AG04449 (cell line): ENCODE measurements at regions of chr5 and their contacts with region 1.

Region 1: GRCh38 chr5:167565032-167565954 is 726.2 kb upstream of the WWC1 start:
- DNase-seq: no peak
- H3K4me3 ChIP-seq: no peak overlapping the region
- CTCF ChIP-seq: peak; percentile 17

Region 2: GRCh38 chr5:166961039-166961438 is 604.3 kb before region 1 on chr5:
- CTCF ChIA-PET with region 1: interaction called, 15 read pairs
- POLR2A ChIA-PET with region 1: no interaction called
- DNase-seq: no peak
- H3K4me3 ChIP-seq: no peak overlapping the region
- CTCF ChIP-seq: no peak

Region 3: DNA sequence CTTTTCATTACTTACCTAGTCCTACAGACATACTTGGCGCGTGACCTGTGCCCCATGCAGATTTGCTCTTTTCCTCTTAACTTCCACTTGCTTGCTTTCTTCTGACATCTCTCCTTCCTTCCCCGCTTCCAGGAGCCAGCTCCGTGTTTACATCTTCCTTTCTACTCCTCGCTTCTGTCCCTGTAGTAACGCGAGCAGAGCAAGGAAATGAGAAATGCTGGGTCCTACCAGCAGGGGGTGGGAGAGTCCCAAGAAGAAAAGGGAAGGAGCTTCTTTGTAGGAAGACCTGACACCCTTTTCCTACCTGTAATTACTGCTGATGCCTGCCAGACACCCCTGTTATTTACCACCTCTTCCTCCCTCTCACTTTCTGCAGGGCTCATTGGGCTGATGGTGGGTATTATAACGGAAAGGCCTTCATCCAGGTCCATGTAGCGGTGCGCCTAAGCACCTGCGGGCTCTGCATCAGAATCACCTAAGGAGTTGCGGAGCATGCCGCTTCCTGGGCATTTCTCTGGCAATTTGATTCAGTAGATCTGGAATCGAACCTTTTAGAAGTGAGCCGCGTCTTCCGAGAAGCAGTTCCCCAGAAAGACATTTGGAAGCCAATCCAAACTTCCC is 534.7 kb before region 1 on chr5:
- CTCF ChIA-PET with region 1: interaction called, 12 read pairs
- POLR2A ChIA-PET with region 1: no interaction called
- DNase-seq: no peak
- H3K4me3 ChIP-seq: no peak overlapping the region
- CTCF ChIP-seq: peak; percentile 31

Region 4: DNA sequence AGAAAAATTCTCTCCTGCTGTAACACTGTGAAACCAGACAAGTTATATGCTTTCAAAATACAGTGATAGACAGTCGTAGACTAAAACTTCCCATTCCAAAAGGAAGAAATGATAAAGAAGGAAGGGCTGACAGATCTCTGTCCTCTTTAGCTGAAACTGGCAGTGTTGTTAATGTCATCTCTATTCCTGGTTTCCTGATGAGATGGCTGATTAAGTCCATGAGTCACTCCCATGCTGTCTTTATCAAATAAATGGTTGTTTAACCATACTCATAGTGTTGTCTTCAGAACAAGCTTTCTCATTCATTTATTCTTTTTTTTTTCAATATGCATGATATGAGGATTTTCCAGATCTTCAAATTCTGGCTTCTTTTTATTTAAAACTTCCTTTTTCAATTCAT is 226.1 kb before region 1 on chr5:
- CTCF ChIA-PET with region 1: no interaction called
- POLR2A ChIA-PET with region 1: no interaction called
- DNase-seq: no peak
- H3K4me3 ChIP-seq: no peak overlapping the region
- CTCF ChIP-seq: no peak

Region 5: DNA sequence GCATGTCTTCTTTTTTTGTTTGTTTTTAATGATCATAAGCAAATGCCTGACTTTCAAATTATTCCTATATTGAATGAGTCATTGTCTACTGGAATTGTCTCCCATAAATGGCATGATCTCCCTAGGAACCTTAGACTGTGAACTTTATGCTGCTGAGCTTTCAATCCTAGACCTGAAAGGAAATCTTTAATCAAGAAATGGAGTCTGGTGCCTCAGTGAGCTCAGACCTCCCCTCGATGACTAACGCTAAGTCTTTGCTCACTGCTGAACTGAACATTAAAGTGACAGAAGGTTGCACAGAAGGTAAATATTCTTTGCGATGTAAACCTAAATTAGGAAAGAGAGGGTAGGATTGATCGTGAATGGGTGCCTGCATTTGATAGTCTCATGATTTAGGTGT is 19.0 kb before region 1 on chr5:
- CTCF ChIA-PET with region 1: no interaction called
- POLR2A ChIA-PET with region 1: no interaction called
- DNase-seq: no peak
- H3K4me3 ChIP-seq: no peak overlapping the region
- CTCF ChIP-seq: no peak

Region 6: DNA sequence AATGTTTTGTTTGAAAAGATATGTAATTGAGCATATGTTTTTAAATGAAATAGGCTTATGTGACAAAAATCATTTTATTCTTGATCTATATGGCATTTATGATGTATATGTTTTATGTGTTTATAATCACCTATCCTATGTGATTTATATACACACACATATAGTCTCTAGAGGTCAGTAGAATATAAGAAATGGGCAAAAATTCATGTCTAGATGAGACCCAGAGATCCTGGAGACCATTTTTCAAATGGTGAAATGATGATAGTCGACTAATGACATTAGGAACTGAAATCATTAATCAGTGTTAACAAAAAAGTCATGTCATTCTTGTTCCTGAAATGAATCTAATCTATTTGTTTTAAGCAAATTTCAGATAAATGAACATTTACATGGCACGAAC is 17.0 kb after region 1 on chr5:
- CTCF ChIA-PET with region 1: no interaction called
- POLR2A ChIA-PET with region 1: no interaction called
- DNase-seq: no peak
- H3K4me3 ChIP-seq: no peak overlapping the region
- CTCF ChIP-seq: peak; percentile 5

Region 7: DNA sequence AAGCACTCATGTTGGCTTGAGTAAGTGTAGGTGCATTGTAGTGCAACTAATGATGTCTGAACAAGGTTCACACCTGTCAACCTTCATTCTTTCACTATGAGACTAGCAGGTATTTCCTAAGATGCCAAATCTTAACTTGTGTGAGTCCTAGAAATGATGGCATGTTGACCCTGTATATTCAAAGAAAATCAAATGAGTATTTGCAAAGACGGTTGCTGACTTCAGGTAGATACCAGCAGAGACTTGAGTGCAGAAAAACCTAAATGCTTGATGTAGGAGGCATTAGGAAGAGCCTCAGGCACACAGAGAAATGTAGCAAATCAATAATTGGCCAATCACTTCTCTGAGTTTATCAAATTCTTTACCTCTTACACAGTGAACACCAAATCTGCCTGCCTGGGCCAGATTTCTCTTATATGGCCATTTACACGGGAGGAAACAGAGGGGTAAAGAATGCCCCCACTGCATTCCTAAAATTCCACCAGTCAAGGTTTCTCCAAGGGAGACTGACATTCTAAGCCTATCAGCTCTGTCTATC is 237.6 kb after region 1 on chr5:
- CTCF ChIA-PET with region 1: no interaction called
- POLR2A ChIA-PET with region 1: no interaction called
- DNase-seq: no peak
- H3K4me3 ChIP-seq: no peak overlapping the region
- CTCF ChIP-seq: no peak